H1 (cell line): ENCODE measurements at regions of chr7 and their contacts with region 1.

Region 1: DNA sequence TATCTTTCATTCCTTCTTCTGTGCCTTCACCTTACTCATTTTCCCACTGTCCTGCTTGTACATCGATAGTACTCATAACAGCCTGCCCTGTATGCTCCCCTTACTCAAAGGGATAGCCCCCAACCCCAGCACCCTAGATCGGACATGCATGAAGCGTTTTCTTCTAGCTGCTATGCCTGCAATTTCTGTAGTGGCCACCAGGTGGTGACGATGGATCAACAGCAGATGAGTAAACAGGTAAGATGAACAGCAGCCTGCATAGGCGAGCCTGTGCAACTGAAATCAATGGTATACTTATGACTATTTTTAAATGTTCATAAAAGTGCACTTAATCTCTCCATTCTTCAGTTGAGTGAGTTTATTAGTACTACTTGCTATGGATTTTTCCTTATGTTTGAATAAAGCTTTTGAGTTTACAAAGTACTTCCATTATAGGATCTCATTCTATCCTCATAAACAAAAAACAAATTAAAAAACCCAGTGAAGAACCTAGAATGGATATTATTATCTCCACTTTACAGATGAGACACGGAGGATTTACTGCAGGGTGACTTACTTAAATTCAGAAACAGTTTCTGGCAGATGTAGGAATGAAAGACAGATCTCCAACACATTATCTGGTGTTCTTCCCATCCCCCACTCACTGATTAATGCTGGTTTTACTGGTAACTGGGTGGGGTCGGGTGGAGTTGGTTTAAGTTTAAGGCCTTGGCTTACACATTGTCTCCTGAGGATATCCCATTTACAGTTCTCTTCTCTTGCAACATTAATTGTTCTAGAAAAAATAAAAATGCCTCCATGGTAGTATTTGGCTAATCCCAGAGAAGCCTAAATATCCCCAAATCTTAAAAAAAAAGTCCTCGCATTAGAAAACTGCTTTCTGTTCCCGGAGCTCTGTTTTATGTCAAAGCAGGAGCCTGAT is 222.1 kb downstream of the GLI3 start:
- DNase-seq: peak; percentile 23 to 86
- H3K4me3 ChIP-seq: no peak overlapping the region
- H3K27ac ChIP-seq: no peak overlapping the region
- H3K4me1 ChIP-seq: peaks cover 0 to 4% (median 0%) of the 10 kb centered on the region in 4 experiments; a peak in 2 of 7 replicates
- H3K27me3 ChIP-seq: no peaks in the 10 kb centered on the region
- CTCF ChIP-seq: peak; percentile 57 to 89 (median 76)
- EP300 ChIP-seq: no peak
- POLR2A ChIP-seq: no peak
- RAD21 ChIP-seq: peak; percentile 88 to 92

Region 2: GRCh38 chr7:41110186-41110585 is 904.7 kb before region 1 on chr7:
- CTCF ChIA-PET with region 1: no interaction called
- POLR2A ChIA-PET with region 1: no interaction called
- DNase-seq: no peak
- H3K4me3 ChIP-seq: no peak overlapping the region
- H3K27ac ChIP-seq: no peak overlapping the region
- H3K4me1 ChIP-seq: no peaks in the 10 kb centered on the region
- H3K27me3 ChIP-seq: no peaks in the 10 kb centered on the region
- CTCF ChIP-seq: no peak
- EP300 ChIP-seq: no peak
- POLR2A ChIP-seq: no peak
- RAD21 ChIP-seq: no peak

Region 3: GRCh38 chr7:42025635-42026375 is 10.9 kb after region 1 on chr7:
- CTCF ChIA-PET with region 1: interaction called, 45 read pairs
- POLR2A ChIA-PET with region 1: no interaction called
- DNase-seq: no peak
- H3K4me3 ChIP-seq: no peak overlapping the region
- H3K27ac ChIP-seq: no peak overlapping the region
- H3K4me1 ChIP-seq: peaks cover 6 to 26% (median 17%) of the 10 kb centered on the region in 4 experiments; a peak in 6 of 7 replicates
- H3K27me3 ChIP-seq: no peaks in the 10 kb centered on the region
- CTCF ChIP-seq: peak in 1 of 3 experiments; percentile 11; a peak in 1 of 4 replicates
- EP300 ChIP-seq: no peak
- POLR2A ChIP-seq: no peak
- RAD21 ChIP-seq: no peak

Region 4: DNA sequence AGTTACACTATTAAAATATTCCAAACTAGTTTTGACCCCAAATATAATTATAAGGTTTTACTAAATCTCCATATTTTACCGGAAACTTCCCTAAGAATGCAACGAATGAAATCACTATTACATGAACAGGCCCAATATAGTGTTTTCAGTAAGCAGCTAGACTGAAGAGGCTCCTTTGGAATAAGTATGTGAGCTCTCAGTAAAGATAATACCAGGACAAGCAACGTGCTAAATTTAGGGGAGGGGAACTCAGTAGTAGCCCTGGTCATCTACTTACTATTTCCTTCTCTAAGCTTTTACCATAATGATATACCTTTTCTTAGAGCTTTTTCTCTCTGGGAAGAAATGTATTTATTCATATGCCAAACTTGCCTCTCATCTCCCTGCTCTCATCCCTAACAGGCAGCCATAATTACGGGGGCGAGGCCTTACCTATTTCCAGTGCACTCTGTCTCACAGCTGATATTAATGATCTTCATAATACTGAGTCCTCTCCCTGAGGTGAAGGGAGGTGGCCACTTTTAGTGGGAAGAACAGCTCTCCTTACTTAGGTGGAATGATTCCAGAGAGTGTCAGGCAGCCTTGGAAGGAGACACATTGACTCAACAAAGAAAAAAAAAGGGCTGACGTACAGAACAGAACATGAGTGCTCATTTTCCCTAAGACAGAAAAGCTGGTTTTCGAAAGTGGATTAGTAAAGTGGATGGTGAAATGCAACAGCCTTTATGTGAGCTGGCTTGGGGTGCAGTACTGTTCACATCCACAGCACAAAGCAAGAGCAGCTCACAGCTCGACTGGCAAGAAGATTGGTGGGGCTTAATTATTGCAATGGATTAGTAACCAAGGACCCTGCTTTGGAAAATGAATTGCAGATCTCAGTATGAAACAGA is 56.7 kb after region 1 on chr7:
- CTCF ChIA-PET with region 1: interaction called, 11 read pairs
- POLR2A ChIA-PET with region 1: no interaction called
- DNase-seq: no peak
- H3K4me3 ChIP-seq: no peak overlapping the region
- H3K27ac ChIP-seq: no peak overlapping the region
- H3K4me1 ChIP-seq: peaks cover 0 to 6% (median 3%) of the 10 kb centered on the region in 4 experiments; a peak in 6 of 7 replicates
- H3K27me3 ChIP-seq: no peaks in the 10 kb centered on the region; a peak in 1 of 7 replicates
- CTCF ChIP-seq: peak in 2 of 3 experiments; percentile 11 to 25; a peak in 2 of 4 replicates
- EP300 ChIP-seq: no peak
- POLR2A ChIP-seq: no peak
- RAD21 ChIP-seq: no peak; a peak in 1 of 4 replicates

Region 5: DNA sequence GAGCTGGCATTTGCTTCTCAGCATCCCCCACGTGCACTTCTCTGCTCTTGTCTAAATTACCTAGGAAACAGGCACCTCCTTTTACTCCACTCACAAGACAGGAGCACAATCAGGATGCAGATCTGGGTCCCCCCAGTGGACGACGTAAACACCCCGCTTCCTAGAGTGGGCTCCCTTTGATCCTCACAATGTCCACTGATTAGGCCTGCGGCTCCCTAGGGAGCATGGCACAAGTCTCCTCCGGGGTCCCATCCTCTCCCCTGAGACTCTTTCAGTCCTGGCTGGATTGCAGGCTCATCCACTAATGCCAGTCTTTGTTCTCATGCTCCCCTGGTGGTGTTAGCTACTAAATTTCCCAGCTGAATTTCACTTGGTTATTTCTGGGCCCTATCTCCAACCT is 123.8 kb after region 1 on chr7:
- CTCF ChIA-PET with region 1: interaction called, 13 read pairs
- POLR2A ChIA-PET with region 1: no interaction called
- DNase-seq: peak in 1 of 2 experiments; percentile 53
- H3K4me3 ChIP-seq: no peak overlapping the region
- H3K27ac ChIP-seq: no peak overlapping the region
- H3K4me1 ChIP-seq: peaks cover 2 to 17% (median 7%) of the 10 kb centered on the region in 4 experiments; a peak in 4 of 7 replicates
- H3K27me3 ChIP-seq: no peaks in the 10 kb centered on the region
- CTCF ChIP-seq: peak in 1 of 3 experiments; percentile 28; a peak in 1 of 4 replicates
- EP300 ChIP-seq: no peak
- POLR2A ChIP-seq: no peak
- RAD21 ChIP-seq: peak in 1 of 2 experiments; percentile 36; a peak in 2 of 4 replicates